ENCODE measurements at regions of chr3 and their contacts with region 1.

Region 1: GRCh38 chr3:123947482-123947881 is 13.5 kb downstream of the CCDC14 start:
- DNase-seq: no peak
- ATAC-seq: no peak
- H3K4me3 ChIP-seq: no peak overlapping the region
- H3K27ac ChIP-seq: no peak overlapping the region
- H3K4me1 ChIP-seq: no peaks in the 10 kb centered on the region
- H3K27me3 ChIP-seq: no peaks in the 10 kb centered on the region
- CTCF ChIP-seq: no peak

Region 2: GRCh38 chr3:123143669-123144411 is 803.6 kb before region 1 on chr3:
- CTCF ChIA-PET with region 1: no interaction called
- POLR2A ChIA-PET with region 1: no interaction called
- in situ Hi-C with region 1: no loop called
- intact Hi-C with region 1: no loop called
- DNase-seq: no peak
- ATAC-seq: peak; percentile 44; the same call in 1 of the 2 replicates
- H3K4me3 ChIP-seq: no peak overlapping the region
- H3K27ac ChIP-seq: no peak overlapping the region
- H3K4me1 ChIP-seq: no peaks in the 10 kb centered on the region
- H3K27me3 ChIP-seq: no peaks in the 10 kb centered on the region
- CTCF ChIP-seq: no peak

Region 3: GRCh38 chr3:123876858-123877257 is 70.6 kb before region 1 on chr3:
- CTCF ChIA-PET with region 1: no interaction called
- POLR2A ChIA-PET with region 1: no interaction called
- in situ Hi-C with region 1: no loop called
- intact Hi-C with region 1: no loop called
- DNase-seq: no peak
- ATAC-seq: no peak
- H3K4me3 ChIP-seq: no peak overlapping the region
- H3K27ac ChIP-seq: no peak overlapping the region
- H3K4me1 ChIP-seq: no peaks in the 10 kb centered on the region
- H3K27me3 ChIP-seq: 0 out of 2 replicates have a peak, but pooled peaks cover 3% of the 10 kb centered on the region
- CTCF ChIP-seq: peak; percentile 37; the same call in 1 of the 2 replicates

Region 4: GRCh38 chr3:123899300-123899865 is 48.1 kb before region 1 on chr3:
- CTCF ChIA-PET with region 1: no interaction called
- POLR2A ChIA-PET with region 1: no interaction called
- in situ Hi-C with region 1: no loop called
- intact Hi-C with region 1: no loop called
- DNase-seq: no peak
- ATAC-seq: no peak
- H3K4me3 ChIP-seq: no peak overlapping the region
- H3K27ac ChIP-seq: no peak overlapping the region
- H3K4me1 ChIP-seq: no peaks in the 10 kb centered on the region
- H3K27me3 ChIP-seq: no peaks in the 10 kb centered on the region
- CTCF ChIP-seq: no peak

Region 5: DNA sequence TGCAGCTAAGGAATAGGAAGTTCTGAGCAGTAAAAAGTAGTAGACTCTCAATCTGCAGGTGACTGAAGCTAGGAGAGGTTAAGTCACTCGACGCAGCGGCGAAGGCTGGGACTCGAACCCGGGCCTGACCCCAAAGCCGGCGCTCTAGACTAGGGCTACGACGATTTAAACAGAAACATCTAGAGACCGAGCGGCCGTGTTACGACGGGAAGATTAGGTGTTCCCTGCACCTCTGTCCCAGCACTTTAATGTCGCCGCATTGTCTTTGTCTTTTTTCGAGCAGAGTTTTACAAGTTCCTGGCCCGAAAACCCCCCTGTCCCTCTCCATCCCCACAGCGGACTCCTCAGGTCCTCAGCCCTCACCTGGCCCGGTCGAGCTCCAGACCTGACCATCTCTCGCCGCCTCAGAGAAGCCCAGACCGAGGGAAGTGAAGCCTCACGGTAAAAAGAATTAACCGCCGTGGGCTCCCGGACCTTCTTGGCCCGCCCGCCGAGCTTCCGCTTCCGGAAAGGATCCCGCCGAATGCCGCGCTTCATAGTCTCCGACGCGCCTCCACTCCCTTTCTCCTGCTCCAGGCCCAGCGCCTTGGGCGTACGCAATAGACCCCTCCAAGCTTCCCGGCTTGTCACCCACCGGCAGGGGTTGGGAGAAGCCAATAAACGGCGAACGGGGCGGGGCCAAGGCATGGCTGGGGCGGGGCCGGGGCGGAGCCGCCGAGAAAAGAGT is 13.5 kb after region 1 on chr3 and contains the start of gene CCDC14:
- CTCF ChIA-PET with region 1: no interaction called
- POLR2A ChIA-PET with region 1: no interaction called
- in situ Hi-C with region 1: no loop called
- intact Hi-C with region 1: no loop called
- DNase-seq: peak; percentile 47
- ATAC-seq: peak; percentile 99
- H3K4me3 ChIP-seq: peak within 1 kb of the TSS; percentile 94 to 96
- H3K27ac ChIP-seq: peak within 1 kb of the TSS; percentile 97
- H3K4me1 ChIP-seq: no peaks in the 10 kb centered on the region; the same call in 1 of the 2 replicates
- H3K27me3 ChIP-seq: peaks cover 3% of the 10 kb centered on the region; the same call in 1 of the 2 replicates
- CTCF ChIP-seq: no peak
- total RNA-seq, gene CCDC14: 57.7 TPM

Region 6: GRCh38 chr3:124174476-124174875 is 227.0 kb after region 1 on chr3:
- CTCF ChIA-PET with region 1: no interaction called
- POLR2A ChIA-PET with region 1: interaction called, 10 read pairs
- in situ Hi-C with region 1: no loop called
- intact Hi-C with region 1: no loop called
- DNase-seq: no peak
- ATAC-seq: no peak
- H3K4me3 ChIP-seq: no peak overlapping the region
- H3K27ac ChIP-seq: no peak overlapping the region
- H3K4me1 ChIP-seq: no peaks in the 10 kb centered on the region
- H3K27me3 ChIP-seq: peaks cover 3% of the 10 kb centered on the region; the same call in 1 of the 2 replicates
- CTCF ChIP-seq: no peak

Measured in Panc1 (cell line).